ENCODE measurements at regions of chr3 and their contacts with region 1.

Region 1: DNA sequence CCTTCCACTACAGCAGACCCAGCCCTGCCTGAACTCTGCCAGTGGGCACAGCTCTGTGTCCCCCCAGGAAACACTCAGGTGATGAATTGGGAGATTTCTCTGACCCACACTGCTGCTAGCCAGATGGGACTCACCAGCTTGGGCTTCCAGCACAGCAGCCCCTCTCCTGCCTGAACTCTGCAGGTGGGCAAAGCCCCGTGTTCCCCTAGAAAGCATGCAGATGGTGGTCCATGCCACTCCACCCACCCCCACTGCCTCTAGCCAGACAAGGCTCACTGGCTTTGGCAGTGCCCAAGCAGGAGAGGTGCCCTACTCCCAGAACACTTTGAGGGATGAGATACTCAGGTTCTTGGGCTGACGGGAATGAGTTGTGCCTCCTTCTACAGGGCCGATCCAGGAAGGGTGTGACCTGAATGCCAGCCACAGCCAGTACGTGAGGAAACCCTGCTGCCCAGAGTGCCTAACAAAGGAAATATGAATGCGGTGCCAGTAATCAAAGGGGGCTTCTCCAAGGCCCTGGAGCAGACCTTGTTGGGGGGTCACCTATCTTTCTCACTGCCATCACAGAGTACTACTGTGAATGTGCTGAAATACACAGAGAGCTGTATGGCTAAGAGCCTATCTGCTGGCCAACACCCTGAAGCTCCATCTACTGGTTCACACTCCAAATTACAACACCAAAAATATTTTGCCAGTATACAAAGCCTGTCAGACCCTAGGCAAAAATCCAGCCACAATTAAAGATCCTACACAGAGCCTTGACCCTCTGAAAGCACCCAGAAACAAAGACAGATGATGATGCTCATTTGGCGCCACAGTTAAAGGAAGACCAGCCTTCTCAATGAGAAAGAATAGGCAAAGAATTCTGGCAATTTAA is 61.9 kb downstream of the BTLA start:
- DNase-seq: peak; percentile 22
- ATAC-seq: peak; percentile 92
- H3K4me3 Mint-ChIP-seq: no peak overlapping the region
- H3K27ac Mint-ChIP-seq: peak overlapping the region; percentile 64
- H3K4me1 Mint-ChIP-seq: peaks cover 39% of the 10 kb centered on the region
- H3K27me3 Mint-ChIP-seq: no peaks in the 10 kb centered on the region

Region 2: GRCh38 chr3:112247900-112248299 is 189.5 kb before region 1 on chr3:
- CTCF ChIA-PET with region 1: no interaction called
- POLR2A ChIA-PET with region 1: no interaction called
- intact Hi-C with region 1: no loop called
- DNase-seq: no peak
- ATAC-seq: no peak
- H3K4me3 Mint-ChIP-seq: no peak overlapping the region
- H3K27ac Mint-ChIP-seq: no peak overlapping the region
- H3K4me1 Mint-ChIP-seq: no peaks in the 10 kb centered on the region
- H3K27me3 Mint-ChIP-seq: peaks cover 2% of the 10 kb centered on the region

Region 3: DNA sequence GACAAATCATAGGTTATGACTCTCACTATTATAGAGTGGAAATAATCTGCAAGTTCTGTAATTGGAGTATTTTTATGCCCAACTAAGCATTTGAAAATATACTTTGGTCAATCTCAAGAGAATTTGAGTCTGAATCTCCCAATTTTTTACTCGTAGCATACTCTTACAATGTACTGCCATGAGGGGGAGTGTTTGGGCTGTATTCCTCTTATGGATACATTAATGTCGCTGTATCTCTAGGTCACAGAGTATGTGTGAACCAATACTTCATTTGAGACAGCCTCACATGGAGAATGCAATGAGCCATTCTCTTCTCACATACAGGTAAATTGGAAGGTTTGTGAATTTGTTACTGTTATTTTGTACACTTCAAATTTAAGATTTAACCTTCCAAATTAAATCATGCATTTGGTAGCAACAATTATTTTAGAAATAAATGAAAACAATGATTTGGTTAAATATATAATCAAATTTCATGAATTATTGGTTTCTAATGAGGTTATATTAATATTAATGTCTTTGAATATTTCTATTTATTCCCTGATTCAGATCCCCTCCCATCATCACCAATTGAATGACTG is 109.9 kb before region 1 on chr3:
- CTCF ChIA-PET with region 1: interaction called, 24 read pairs
- POLR2A ChIA-PET with region 1: no interaction called
- intact Hi-C with region 1: loop called (anchors 1 kb)
- DNase-seq: peak; percentile 54
- ATAC-seq: peak; percentile 100
- H3K4me3 Mint-ChIP-seq: no peak overlapping the region
- H3K27ac Mint-ChIP-seq: no peak overlapping the region
- H3K4me1 Mint-ChIP-seq: peaks cover 4% of the 10 kb centered on the region
- H3K27me3 Mint-ChIP-seq: peaks cover 7% of the 10 kb centered on the region

Region 4: DNA sequence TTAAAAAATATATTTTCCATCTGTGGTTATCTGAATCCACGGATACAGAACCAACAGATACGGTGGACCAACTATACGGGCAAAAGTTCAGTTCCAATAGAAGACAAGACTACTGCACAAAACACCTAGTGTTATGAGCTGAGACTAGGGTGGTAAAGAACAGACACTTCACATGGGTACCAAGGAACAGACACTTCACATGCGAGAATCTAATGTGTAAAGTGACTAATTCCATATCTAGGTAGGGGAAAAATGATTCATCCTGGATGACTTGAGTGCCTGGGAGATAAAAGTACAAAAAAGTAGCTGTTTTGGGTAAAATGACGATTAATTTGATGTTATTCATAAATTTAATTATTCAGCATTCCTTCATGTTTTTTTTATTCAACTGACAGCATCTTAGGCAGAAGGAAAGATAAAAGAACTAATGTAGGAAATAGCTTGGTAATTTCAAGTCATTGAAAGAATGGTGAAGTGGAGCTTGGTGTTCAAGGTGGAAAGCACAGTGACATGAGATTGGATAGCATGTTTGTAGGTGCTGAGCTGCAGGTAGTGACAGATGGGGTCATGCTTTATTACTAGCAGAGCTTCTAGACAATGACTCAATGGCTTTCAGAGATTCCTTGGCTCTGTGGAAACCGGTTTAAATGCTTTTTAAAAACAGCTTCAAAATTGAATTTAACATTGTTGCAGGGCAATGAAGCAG is 99.2 kb before region 1 on chr3:
- CTCF ChIA-PET with region 1: interaction called, 24 read pairs
- POLR2A ChIA-PET with region 1: interaction called, 3 read pairs
- intact Hi-C with region 1: no loop called
- DNase-seq: no peak
- ATAC-seq: peak; percentile 80
- H3K4me3 Mint-ChIP-seq: peak overlapping the region; percentile 26
- H3K27ac Mint-ChIP-seq: peak overlapping the region; percentile 78
- H3K4me1 Mint-ChIP-seq: peaks cover 64% of the 10 kb centered on the region
- H3K27me3 Mint-ChIP-seq: no peaks in the 10 kb centered on the region

Region 5: GRCh38 chr3:112390783-112391641 is 46.4 kb before region 1 on chr3:
- CTCF ChIA-PET with region 1: no interaction called
- POLR2A ChIA-PET with region 1: no interaction called
- intact Hi-C with region 1: loop called in 1 of 2 experiments (anchors 5 kb)
- DNase-seq: no peak
- ATAC-seq: peak; percentile 73
- H3K4me3 Mint-ChIP-seq: no peak overlapping the region
- H3K27ac Mint-ChIP-seq: peak overlapping the region; percentile 70
- H3K4me1 Mint-ChIP-seq: peaks cover 53% of the 10 kb centered on the region
- H3K27me3 Mint-ChIP-seq: no peaks in the 10 kb centered on the region

Region 6: DNA sequence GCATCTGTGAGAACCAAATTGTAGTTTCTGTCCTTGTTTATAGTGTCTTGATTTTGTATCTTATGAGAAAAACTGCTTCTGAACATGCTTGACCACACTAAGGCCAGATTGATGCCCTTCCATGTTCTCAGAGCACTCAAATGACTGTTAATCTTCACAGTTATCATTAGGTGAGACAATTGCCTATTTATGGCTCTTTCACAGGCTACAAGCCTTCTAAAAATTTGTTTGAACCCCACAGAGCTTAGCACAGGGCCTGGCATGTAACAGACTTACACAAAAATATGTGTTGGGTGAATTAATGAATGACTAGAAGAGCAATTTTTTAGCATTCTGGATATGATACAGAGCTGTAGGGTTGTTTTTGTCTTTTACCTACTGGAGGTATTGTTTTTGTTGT is 18.8 kb after region 1 on chr3:
- CTCF ChIA-PET with region 1: interaction called, 13 read pairs
- POLR2A ChIA-PET with region 1: no interaction called
- intact Hi-C with region 1: no loop called
- DNase-seq: no peak
- ATAC-seq: no peak
- H3K4me3 Mint-ChIP-seq: no peak overlapping the region
- H3K27ac Mint-ChIP-seq: no peak overlapping the region
- H3K4me1 Mint-ChIP-seq: peaks cover 18% of the 10 kb centered on the region
- H3K27me3 Mint-ChIP-seq: no peaks in the 10 kb centered on the region

Measured in activated CD4-positive, alpha-beta T cell treated with anti-CD3 and anti-CD28 coated beads for 36 hours (primary cell).